ENCODE measurements at regions of chr1 and their contacts with region 1.

Region 1: GRCh38 chr1:60978421-60979357 is 103.7 kb upstream of the NFIA start:
- DNase-seq: peak; percentile 43
- H3K4me3 Mint-ChIP-seq: no peak overlapping the region
- H3K27ac Mint-ChIP-seq: no peak overlapping the region
- H3K4me1 Mint-ChIP-seq: no peaks in the 10 kb centered on the region
- H3K27me3 Mint-ChIP-seq: peaks cover 2% of the 10 kb centered on the region

Region 2: GRCh38 chr1:60960891-60961461 is 17.7 kb before region 1 on chr1:
- CTCF ChIA-PET with region 1: no interaction called
- DNase-seq: no peak
- H3K4me3 Mint-ChIP-seq: no peak overlapping the region
- H3K27ac Mint-ChIP-seq: no peak overlapping the region
- H3K4me1 Mint-ChIP-seq: no peaks in the 10 kb centered on the region
- H3K27me3 Mint-ChIP-seq: peaks cover 2% of the 10 kb centered on the region

Region 3: GRCh38 chr1:61043010-61043820 is 64.5 kb after region 1 on chr1:
- CTCF ChIA-PET with region 1: interaction called, 13 read pairs
- DNase-seq: peak; percentile 89
- H3K4me3 Mint-ChIP-seq: peak overlapping the region; percentile 59
- H3K27ac Mint-ChIP-seq: no peak overlapping the region
- H3K4me1 Mint-ChIP-seq: no peaks in the 10 kb centered on the region
- H3K27me3 Mint-ChIP-seq: peaks cover 39% of the 10 kb centered on the region

Measured in activated naive CD4-positive, alpha-beta T cell treated with anti-CD3 and anti-CD28 coated beads, Interleukin-2, amount 10 ng/mL, durations not matched to agents 7 days and 5 days (primary cell).